Activated CD4-positive, alpha-beta memory T cell treated with anti-CD3 and anti-CD28 coated beads, Interleukin-2, amount 10 ng/mL, durations not matched to agents 7 days and 5 days (primary cell): ENCODE measurements at regions of chr15 and their contacts with region 1.

Region 1: GRCh38 chr15:34209421-34210282 is at the start of gene KATNBL1:
- DNase-seq: peak; percentile 97
- H3K4me3 Mint-ChIP-seq: peak within 1 kb of the TSS; percentile 91
- H3K27ac Mint-ChIP-seq: peak within 1 kb of the TSS; percentile 77
- H3K4me1 Mint-ChIP-seq: peaks cover 20% of the 10 kb centered on the region
- H3K27me3 Mint-ChIP-seq: no peaks in the 10 kb centered on the region
- total RNA-seq, gene KATNBL1: 40.5 to 42.1 TPM

Region 2: DNA sequence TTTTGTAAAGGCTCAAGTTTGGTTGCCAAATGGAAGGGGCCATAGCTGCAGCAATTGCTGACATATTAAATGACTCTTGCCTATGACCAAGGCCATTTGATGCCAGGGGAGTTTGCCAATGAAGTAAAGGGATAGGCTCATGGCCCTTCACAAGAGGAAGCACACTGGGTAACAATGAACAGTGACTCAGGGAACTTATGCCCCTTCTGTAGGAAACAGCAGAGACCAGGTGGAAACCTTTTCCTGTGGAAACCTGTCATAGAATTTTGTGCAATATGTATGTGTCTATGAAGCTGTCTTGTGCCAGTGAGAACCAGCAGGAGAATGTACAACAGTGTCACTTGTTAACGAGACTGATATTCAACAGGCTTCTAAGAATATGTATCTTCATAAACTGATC is 145.2 kb before region 1 on chr15:
- CTCF ChIA-PET with region 1: interaction called, 22 read pairs
- POLR2A ChIA-PET with region 1: interaction called, 4 read pairs
- DNase-seq: no peak
- H3K4me3 Mint-ChIP-seq: no peak overlapping the region
- H3K27ac Mint-ChIP-seq: no peak overlapping the region
- H3K4me1 Mint-ChIP-seq: peaks cover 15% of the 10 kb centered on the region
- H3K27me3 Mint-ChIP-seq: no peaks in the 10 kb centered on the region

Region 3: DNA sequence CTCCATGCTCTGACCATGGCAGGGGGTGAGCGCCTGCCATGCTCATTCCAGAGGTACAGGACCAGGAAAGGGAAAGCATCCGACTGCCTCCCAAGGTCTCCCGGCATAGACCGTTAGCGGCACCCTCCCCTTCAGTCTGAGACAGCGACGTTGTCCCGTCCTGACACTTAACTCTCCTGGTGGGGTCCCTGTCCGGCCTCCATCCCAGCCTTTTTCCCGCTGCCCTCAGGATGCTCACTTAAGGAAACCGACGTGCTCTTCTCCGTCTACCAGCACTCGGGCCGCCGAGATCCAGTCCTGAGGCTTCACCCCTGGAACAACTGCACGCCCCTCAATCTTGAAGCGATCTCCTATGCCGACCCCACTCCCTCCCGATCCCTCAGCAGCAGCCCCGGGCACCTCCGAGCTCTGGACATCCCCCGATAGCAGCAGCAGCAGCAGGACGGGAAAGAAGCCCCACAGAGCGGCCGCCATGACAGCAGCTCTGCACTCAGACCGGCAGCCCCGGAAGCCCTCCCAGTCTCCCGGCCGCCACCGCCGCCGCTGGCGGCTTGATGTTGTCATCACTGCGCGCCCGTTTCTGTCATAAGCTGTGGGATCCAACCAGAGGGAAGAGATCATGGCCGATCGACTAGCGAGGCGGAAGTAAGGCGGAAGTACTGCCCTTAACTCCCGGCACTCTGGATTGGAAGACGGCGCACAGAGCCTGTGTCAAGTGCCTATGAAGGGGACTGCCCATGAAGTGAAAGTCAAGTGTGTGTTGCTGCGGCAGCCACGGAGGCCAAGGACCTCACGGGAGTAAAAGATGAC is 108.1 kb before region 1 on chr15 and contains the starts of genes EMC7 and PGBD4:
- CTCF ChIA-PET with region 1: interaction called, 17 read pairs
- POLR2A ChIA-PET with region 1: interaction called, 30 read pairs
- DNase-seq: peak; percentile 100
- H3K4me3 Mint-ChIP-seq: peak within 1 kb of the TSS; percentile 96
- H3K27ac Mint-ChIP-seq: peak within 1 kb of the TSS; percentile 90
- H3K4me1 Mint-ChIP-seq: peaks cover 37% of the 10 kb centered on the region
- H3K27me3 Mint-ChIP-seq: no peaks in the 10 kb centered on the region
- total RNA-seq, gene EMC7: 78.7 to 81.8 TPM
- total RNA-seq, gene PGBD4: 3.1 to 3.3 TPM

Region 4: GRCh38 chr15:34109797-34110663 is 99.6 kb before region 1 on chr15:
- CTCF ChIA-PET with region 1: interaction called, 36 read pairs
- POLR2A ChIA-PET with region 1: interaction called, 14 read pairs
- DNase-seq: no peak
- H3K4me3 Mint-ChIP-seq: no peak overlapping the region
- H3K27ac Mint-ChIP-seq: no peak overlapping the region
- H3K4me1 Mint-ChIP-seq: peaks cover 6% of the 10 kb centered on the region
- H3K27me3 Mint-ChIP-seq: no peaks in the 10 kb centered on the region

Region 5: DNA sequence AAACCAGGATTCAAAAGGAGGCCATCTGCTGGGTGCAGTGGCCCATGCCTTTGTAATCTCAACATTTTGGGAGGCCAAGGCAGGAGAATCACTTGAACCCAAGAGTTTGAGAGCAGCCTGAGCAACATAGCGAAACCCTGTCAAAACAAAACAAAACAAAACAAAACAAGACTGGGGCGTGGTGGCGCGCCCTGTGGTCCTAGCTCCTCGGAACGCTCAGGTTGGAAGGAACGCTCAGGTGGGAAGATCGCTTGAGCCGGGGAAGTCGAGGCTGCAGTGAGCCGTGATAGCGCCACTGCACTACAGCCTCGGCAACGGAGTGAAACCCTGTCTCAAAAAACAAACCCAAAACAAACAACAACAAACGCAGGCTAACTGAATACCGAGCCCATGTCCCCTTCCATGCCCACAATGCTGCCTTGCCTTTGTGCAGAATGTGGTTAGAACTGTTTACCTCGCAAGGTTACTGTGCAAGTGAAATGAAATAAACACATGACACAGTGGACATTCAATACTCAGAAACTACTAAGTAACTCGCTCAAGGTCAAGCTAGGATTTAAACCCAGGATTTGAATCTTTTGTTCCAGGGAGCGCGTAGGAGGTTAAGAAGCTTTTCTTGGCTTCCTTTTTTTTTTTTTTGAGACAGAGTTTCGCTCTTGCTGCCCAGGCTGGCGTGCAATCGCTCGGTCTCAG is 14.4 kb after region 1 on chr15:
- CTCF ChIA-PET with region 1: interaction called, 24 read pairs
- POLR2A ChIA-PET with region 1: interaction called, 29 read pairs
- DNase-seq: no peak
- H3K4me3 Mint-ChIP-seq: peak overlapping the region; percentile 87
- H3K27ac Mint-ChIP-seq: peak overlapping the region; percentile 95
- H3K4me1 Mint-ChIP-seq: peaks cover 36% of the 10 kb centered on the region
- H3K27me3 Mint-ChIP-seq: peaks cover 1% of the 10 kb centered on the region

Region 6: DNA sequence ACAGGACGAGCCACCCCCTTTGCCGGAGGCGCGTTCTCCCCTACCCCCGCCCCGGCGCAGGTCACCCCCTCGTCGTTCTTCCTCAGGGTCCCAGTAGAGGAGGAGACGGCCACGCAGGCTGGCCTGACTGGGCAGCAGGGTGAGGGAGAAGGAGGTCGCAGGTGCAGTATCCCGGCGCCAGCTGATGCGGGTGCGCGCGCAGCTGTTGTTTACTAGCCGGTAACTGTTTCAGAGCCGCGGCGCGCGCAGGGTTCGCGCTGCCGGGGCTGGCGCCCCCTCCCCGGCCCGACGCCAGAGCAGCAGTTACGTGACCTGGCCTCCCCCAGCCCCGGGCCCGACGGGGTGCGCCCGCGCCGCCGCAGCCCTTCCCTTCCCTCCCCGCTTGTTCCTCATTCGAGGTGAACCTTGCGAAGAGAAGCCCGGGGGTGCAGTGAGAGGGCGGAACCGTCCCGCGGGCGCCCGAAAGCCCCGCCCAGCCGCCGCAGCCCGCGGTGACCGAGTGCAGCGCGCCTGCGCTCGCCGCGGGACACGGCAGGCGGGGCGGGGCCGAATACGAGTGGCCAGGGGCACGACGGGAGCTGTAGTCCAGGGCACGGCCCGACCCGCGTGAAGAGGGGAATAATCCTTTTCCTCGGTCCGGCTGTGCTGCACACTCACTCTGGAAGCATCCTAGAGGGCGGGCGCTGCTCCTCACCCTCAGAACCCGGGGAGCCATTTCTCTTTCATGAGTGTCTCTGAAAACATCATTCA is 128.1 kb after region 1 on chr15 and contains the start of gene SLC12A6:
- CTCF ChIA-PET with region 1: interaction called, 3 read pairs
- POLR2A ChIA-PET with region 1: interaction called, 12 read pairs
- DNase-seq: peak; percentile 91
- H3K4me3 Mint-ChIP-seq: peak within 1 kb of the TSS; percentile 96
- H3K27ac Mint-ChIP-seq: peak within 1 kb of the TSS; percentile 95
- H3K4me1 Mint-ChIP-seq: peaks cover 65% of the 10 kb centered on the region
- H3K27me3 Mint-ChIP-seq: no peaks in the 10 kb centered on the region
- total RNA-seq, gene SLC12A6: 30.6 to 31.7 TPM

Region 7: GRCh38 chr15:34348735-34349300 is 139.2 kb after region 1 on chr15:
- CTCF ChIA-PET with region 1: no interaction called
- POLR2A ChIA-PET with region 1: no interaction called
- DNase-seq: no peak
- H3K4me3 Mint-ChIP-seq: no peak overlapping the region
- H3K27ac Mint-ChIP-seq: no peak overlapping the region
- H3K4me1 Mint-ChIP-seq: no peaks in the 10 kb centered on the region
- H3K27me3 Mint-ChIP-seq: no peaks in the 10 kb centered on the region